Activated CD8-positive, alpha-beta T cell treated with anti-CD3 and anti-CD28 coated beads, Interleukin-2, amount 10 ng/mL, durations not matched to agents 7 days and 5 days (primary cell): ENCODE measurements at regions of chr15 and their contacts with region 1.

Region 1: DNA sequence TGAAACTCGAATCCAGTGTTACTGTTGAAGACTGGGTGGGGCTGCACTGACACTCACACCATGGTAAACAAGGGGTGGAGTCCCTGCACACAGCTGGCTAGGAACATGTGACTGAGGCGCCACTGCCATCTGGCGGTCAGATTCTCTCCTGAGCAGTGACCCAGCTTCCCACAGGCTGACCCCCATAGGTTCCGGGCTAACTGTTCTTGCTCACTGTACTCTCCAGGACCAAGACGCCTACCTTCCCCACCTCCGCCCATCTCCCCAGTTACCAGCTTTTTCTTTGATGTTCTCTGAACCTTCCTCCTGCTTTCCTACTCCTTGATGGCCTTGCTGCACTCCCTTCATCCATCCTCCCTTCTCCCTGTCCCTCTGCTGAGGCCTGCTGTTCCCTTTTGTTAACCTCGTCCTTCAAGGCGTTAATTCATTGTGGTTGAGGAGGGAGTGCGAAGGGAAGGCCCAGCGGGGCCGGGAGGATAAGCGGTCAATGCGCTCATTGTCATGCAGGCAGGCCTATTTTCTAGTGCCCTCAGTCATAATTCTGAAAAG is 115.2 kb downstream of the ATP8B4 start:
- DNase-seq: peak; percentile 74
- ATAC-seq: peak; percentile 95
- H3K4me3 Mint-ChIP-seq: no peak overlapping the region
- H3K27ac Mint-ChIP-seq: peak overlapping the region; percentile 31
- H3K4me1 Mint-ChIP-seq: peaks cover 10% of the 10 kb centered on the region
- H3K27me3 Mint-ChIP-seq: peaks cover 2% of the 10 kb centered on the region

Region 2: DNA sequence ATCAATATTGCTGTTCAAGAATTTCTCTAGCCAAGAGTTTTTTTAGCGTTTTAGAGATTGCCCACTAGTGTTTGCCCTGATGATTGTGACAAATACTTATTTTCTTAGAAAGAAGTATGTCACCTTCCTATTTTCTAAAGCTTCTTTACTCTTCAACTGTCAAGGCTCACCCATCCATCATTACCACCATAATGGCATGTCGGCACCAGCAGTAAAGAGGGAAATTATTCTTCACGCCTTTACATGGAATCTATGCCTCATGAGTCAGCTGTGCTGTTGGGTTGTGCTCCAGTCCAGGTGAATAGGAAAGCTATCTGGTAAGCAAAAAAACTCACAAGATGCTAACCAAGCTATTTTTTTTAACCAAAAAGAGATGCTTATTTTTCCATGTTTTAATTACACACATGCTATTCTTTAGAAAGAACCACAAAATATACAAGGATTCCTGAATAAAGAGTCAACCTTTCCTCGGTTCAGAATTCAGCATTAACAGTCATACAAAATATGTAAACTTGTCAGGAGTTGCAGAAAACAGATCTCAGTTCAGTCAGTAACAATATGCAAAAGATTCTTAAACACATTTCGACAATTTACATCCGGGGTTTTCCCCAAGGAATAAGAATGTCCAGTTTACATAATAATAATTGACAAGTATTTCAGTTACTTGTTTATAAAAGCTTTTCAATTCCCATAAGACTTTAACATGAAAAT is 12.9 kb before region 1 on chr15:
- CTCF ChIA-PET with region 1: interaction called, 13 read pairs
- POLR2A ChIA-PET with region 1: no interaction called
- DNase-seq: no peak
- ATAC-seq: no peak
- H3K4me3 Mint-ChIP-seq: no peak overlapping the region
- H3K27ac Mint-ChIP-seq: no peak overlapping the region
- H3K4me1 Mint-ChIP-seq: no peaks in the 10 kb centered on the region
- H3K27me3 Mint-ChIP-seq: no peaks in the 10 kb centered on the region

Region 3: DNA sequence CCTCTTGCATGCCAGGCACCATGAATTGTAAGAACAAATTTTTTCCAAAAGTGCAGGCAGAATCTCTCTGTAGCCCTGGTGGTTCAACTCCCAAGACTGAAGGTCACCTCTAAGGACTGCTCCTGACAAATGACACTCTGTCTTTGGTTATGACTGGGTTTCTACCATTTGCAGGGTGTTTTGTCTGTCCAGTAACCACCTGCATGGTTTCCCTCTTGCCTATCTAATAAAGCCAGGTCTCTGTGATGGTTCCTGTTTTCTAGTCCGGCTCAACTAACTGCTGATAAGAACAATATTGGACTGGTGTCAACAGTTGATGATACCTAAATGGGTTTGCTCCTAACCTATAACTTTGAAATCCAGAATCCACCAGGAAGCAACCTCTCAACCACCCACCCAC is 71.5 kb after region 1 on chr15:
- CTCF ChIA-PET with region 1: no interaction called
- POLR2A ChIA-PET with region 1: no interaction called
- DNase-seq: no peak
- ATAC-seq: no peak
- H3K4me3 Mint-ChIP-seq: no peak overlapping the region
- H3K27ac Mint-ChIP-seq: no peak overlapping the region
- H3K4me1 Mint-ChIP-seq: peaks cover 13% of the 10 kb centered on the region
- H3K27me3 Mint-ChIP-seq: no peaks in the 10 kb centered on the region

Region 4: GRCh38 chr15:50145451-50145872 is 141.6 kb after region 1 on chr15:
- CTCF ChIA-PET with region 1: interaction called, 13 read pairs
- POLR2A ChIA-PET with region 1: no interaction called
- DNase-seq: no peak
- ATAC-seq: peak; percentile 47
- H3K4me3 Mint-ChIP-seq: no peak overlapping the region
- H3K27ac Mint-ChIP-seq: no peak overlapping the region
- H3K4me1 Mint-ChIP-seq: peaks cover 35% of the 10 kb centered on the region
- H3K27me3 Mint-ChIP-seq: no peaks in the 10 kb centered on the region